ENCODE measurements at regions of chr2 and their contacts with region 1.

Region 1: GRCh38 chr2:20051532-20052228 is at the start of gene LAPTM4A:
- DNase-seq: peak; percentile 100
- H3K4me3 Mint-ChIP-seq: no peak within 1 kb of the TSS
- H3K27ac Mint-ChIP-seq: no peak within 1 kb of the TSS
- H3K4me1 Mint-ChIP-seq: peaks cover 24% of the 10 kb centered on the region
- H3K27me3 Mint-ChIP-seq: no peaks in the 10 kb centered on the region
- CTCF ChIP-seq: no peak
- total RNA-seq, gene LAPTM4A: 145 and 160 TPM in 2 replicates

Region 2: DNA sequence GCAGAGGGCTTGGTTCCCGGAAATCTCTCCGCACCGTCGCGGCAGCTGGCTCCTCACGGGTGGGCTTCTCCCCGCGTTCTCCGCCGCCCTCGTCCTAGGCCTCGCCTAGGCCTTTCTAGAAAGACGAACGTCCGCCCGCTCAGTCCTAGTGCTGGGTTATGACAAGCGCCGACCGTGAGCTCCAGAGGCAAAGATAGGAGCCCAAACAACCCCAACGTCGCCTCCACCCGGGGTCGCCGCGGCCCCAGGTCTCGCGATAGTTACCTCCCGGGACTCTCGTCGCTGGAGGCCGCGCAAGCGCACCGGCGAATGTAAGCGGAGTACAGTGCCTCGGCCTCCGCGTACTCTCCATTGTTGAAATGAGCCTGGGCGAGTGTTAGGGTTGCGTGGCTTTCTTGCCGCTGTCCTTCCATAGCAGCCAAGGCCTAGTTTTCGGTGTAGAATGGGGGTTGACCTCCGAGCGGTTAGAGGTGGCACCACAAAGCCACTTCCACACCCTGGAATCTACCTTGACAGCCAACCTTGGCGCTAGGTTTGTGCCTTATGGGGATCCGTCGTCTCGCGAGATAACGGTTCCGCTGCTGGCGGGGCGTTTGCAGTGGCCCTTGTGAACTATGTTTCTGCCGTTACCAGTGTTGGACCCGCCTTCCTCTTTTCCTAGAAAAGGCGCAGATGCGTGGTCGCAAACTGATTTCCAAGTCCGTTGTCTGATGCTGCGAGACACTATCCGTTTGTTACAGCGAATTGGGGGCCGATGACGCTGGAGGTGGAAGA is 150.1 kb before region 1 on chr2 and contains the start of gene TTC32:
- CTCF ChIA-PET with region 1: no interaction called
- POLR2A ChIA-PET with region 1: interaction called, 10 read pairs
- intact Hi-C with region 1: no loop called
- DNase-seq: peak; percentile 95
- H3K4me3 Mint-ChIP-seq: peak within 1 kb of the TSS; percentile 87
- H3K27ac Mint-ChIP-seq: peak within 1 kb of the TSS; percentile 99
- H3K4me1 Mint-ChIP-seq: peaks cover 30% of the 10 kb centered on the region
- H3K27me3 Mint-ChIP-seq: no peaks in the 10 kb centered on the region
- CTCF ChIP-seq: no peak
- total RNA-seq, gene TTC32: 14.1 and 18.2 TPM in 2 replicates

Region 3: DNA sequence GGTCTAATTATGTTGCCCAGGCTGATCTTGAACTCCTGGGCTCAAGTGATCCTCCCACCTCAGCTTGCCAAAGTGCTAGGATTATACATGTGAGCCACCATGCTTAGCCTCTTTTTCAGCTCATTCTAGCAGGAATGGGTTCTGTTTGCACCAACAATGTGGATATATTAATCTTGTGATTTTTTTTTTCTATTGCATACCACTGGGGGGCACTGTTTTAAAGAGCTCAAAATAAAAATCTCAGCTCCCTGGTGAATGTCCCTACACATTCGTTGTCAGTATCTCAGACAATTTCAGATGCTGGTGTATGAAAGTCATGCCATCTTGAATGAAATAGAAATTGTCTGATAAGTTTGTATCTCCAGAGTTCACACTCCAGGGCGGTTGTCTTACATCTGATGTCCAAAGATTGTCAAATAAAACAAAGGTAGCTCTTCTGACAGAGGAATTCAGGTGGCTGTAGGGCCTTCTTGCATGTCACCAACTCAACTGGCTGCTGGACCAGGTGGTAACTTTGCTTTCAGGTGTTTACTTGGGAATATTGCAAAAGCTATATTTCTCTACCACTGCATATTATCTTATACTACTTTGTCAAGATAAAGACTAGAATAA is 36.1 kb before region 1 on chr2:
- CTCF ChIA-PET with region 1: interaction called, 33 read pairs
- POLR2A ChIA-PET with region 1: interaction called, 49 read pairs
- intact Hi-C with region 1: loop called (anchors 1 kb)
- DNase-seq: peak; percentile 68
- H3K4me3 Mint-ChIP-seq: no peak overlapping the region
- H3K27ac Mint-ChIP-seq: no peak overlapping the region
- H3K4me1 Mint-ChIP-seq: no peaks in the 10 kb centered on the region
- H3K27me3 Mint-ChIP-seq: no peaks in the 10 kb centered on the region
- CTCF ChIP-seq: peak; percentile 43

Region 4: DNA sequence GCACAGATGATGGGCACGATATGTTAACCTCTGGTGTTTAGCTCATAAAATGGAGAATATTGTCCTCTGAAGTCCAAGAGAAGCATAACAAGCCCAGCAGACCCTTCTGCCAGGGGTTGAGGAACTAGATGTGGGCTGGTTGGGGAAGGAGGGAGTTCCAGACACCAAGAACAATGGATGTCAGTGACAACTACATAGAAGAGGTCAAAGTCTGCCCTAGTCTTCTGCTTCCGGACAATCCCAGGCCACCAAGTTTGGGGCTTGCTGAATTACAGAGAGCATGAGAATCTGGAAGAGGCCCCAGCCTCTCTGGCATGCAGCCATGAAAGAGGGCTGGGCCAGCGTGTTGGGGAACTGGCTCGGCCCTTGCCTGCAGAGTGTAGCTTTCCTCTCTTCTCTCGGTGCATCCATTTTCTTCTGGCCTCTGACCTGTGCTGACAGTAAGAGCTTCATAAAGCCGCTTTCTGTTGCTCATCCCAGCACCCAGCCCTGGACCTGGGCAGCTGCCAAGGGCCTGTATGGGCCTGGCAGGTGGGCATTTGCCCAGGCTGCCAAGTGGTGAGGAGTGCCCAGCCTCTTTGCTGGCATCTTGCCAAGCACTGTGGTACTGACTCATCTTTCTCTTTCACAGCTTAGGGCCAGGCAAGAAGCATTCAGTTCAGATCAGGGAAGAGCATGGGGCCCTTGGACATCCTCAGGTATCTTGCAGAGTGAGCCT is 14.4 kb after region 1 on chr2:
- CTCF ChIA-PET with region 1: interaction called, 4 read pairs
- POLR2A ChIA-PET with region 1: interaction called, 522 read pairs
- intact Hi-C with region 1: loop called (anchors 1 kb)
- DNase-seq: peak; percentile 99
- H3K4me3 Mint-ChIP-seq: peak overlapping the region; percentile 11
- H3K27ac Mint-ChIP-seq: peak overlapping the region; percentile 74
- H3K4me1 Mint-ChIP-seq: peaks cover 25% of the 10 kb centered on the region
- H3K27me3 Mint-ChIP-seq: no peaks in the 10 kb centered on the region
- CTCF ChIP-seq: no peak

Region 5: GRCh38 chr2:20097879-20098714 is 46.4 kb after region 1 on chr2:
- CTCF ChIA-PET with region 1: interaction called, 6 read pairs
- POLR2A ChIA-PET with region 1: interaction called, 83 read pairs
- intact Hi-C with region 1: loop called (anchors 1 kb)
- DNase-seq: peak; percentile 85
- H3K4me3 Mint-ChIP-seq: no peak overlapping the region
- H3K27ac Mint-ChIP-seq: no peak overlapping the region
- H3K4me1 Mint-ChIP-seq: peaks cover 21% of the 10 kb centered on the region
- H3K27me3 Mint-ChIP-seq: no peaks in the 10 kb centered on the region
- CTCF ChIP-seq: peak; percentile 92

Region 6: DNA sequence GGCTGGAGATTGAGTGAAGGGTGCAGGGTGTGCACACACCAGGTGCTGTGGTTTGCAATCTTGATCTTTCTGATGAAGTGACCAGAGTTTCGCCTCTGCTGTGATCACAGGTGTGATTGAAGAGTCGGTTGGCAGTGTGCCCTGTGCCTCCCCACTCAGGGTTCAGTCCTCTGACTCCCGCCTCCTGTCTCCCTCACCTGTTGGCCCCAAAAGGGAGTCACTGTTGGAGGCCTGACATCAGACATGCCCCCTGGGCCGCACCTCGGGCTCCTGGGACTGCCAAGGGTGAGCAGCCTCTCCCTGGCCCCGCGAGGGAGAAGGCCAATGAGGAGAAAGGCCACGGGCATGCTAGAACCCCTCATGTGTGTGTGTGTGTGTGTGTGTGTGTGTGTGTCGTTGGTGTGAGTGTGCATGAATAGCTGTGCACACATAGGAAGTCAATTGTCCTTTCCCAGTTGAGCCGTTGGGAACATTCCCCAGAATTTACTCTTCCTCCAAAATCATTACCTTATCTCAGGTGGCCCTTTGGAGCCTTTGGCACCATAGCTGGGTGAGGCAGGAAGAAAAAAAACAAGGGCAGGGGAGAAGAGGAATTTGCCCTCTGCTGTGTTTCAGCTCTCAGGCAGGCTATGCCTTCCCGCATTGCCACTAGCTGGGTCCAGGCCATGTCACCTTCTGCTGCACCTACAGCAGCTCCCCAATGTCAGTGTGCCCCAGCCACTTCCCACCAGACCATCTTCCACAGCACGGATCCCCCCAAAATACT is 77.8 kb after region 1 on chr2:
- CTCF ChIA-PET with region 1: no interaction called
- POLR2A ChIA-PET with region 1: no interaction called
- intact Hi-C with region 1: no loop called
- DNase-seq: no peak
- H3K4me3 Mint-ChIP-seq: no peak overlapping the region
- H3K27ac Mint-ChIP-seq: no peak overlapping the region
- H3K4me1 Mint-ChIP-seq: peaks cover 5% of the 10 kb centered on the region
- H3K27me3 Mint-ChIP-seq: no peaks in the 10 kb centered on the region
- CTCF ChIP-seq: no peak

Region 7: GRCh38 chr2:20231632-20232031 is 180.0 kb after region 1 on chr2:
- CTCF ChIA-PET with region 1: interaction called, 3 read pairs
- POLR2A ChIA-PET with region 1: interaction called, 22 read pairs
- intact Hi-C with region 1: no loop called
- DNase-seq: peak; percentile 99
- H3K4me3 Mint-ChIP-seq: peak overlapping the region; percentile 43
- H3K27ac Mint-ChIP-seq: peak overlapping the region; percentile 81
- H3K4me1 Mint-ChIP-seq: peaks cover 46% of the 10 kb centered on the region
- H3K27me3 Mint-ChIP-seq: no peaks in the 10 kb centered on the region
- CTCF ChIP-seq: no peak